Heart right ventricle (tissue), 16 donors: ENCODE measurements at regions of chr3 and their contacts with region 1.

Region 1: GRCh38 chr3:82133070-82133606 is 371.7 kb upstream of the GBE1 start:
- DNase-seq: peak; percentile 44 to 53
- ATAC-seq: peak in 7 of 8 donors; percentile 63 to 89 (median 78)
- H3K4me3 ChIP-seq: no peak overlapping the region
- H3K27ac ChIP-seq: no peak overlapping the region
- H3K4me1 ChIP-seq: no peaks in the 10 kb centered on the region
- H3K27me3 ChIP-seq: no peaks in the 10 kb centered on the region
- CTCF ChIP-seq: peak; percentile 73 to 93 (median 87)

Region 2: DNA sequence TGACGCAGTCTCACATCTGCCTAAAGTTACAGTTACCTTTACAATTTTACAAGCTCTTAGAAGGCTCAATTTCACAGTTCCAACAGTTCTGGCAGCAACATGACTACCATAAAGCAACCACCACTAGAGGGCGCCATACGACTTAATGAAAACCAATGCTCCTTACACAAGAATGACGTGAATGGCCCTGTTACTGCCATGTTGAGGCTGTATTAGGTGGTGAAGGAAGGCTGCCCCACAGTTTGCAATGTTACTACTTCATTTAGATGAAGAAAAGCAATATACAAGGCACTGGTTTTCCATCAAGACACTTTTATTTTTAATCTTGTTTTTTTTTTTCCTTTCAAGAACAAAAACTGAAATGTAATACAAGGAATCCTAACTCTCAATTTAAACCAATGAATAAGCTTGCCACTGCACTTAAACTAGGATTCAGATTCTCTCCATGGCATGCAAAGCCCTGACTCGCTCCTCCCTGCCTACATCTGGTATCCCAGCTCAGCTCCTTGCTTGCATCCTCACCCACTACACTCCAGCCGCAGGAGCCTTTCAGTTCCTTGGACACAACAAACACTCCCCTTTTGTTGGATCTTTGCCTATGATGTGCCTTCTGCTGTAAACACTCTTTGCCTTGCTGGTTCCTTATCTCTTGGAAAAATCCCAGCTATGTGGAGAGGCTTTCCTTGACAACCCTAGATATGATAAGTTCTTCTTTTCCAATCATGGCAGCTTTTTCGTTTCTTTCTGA is 642.4 kb before region 1 on chr3:
- intact Hi-C with region 1: loop called in 2 of 10 experiments (anchors 5 to 10 kb)
- DNase-seq: peak; percentile 21 to 81
- ATAC-seq: peak in 7 of 8 donors; percentile 81 to 92 (median 90)
- H3K4me3 ChIP-seq: no peak overlapping the region
- H3K27ac ChIP-seq: peak overlapping the region in 2 of 10 donors; percentile 21 to 66
- H3K4me1 ChIP-seq: peaks cover 0 to 18% (median 8%) of the 10 kb centered on the region in 9 donors
- H3K27me3 ChIP-seq: no peaks in the 10 kb centered on the region
- CTCF ChIP-seq: peak; percentile 53 to 83 (median 73)

Region 3: DNA sequence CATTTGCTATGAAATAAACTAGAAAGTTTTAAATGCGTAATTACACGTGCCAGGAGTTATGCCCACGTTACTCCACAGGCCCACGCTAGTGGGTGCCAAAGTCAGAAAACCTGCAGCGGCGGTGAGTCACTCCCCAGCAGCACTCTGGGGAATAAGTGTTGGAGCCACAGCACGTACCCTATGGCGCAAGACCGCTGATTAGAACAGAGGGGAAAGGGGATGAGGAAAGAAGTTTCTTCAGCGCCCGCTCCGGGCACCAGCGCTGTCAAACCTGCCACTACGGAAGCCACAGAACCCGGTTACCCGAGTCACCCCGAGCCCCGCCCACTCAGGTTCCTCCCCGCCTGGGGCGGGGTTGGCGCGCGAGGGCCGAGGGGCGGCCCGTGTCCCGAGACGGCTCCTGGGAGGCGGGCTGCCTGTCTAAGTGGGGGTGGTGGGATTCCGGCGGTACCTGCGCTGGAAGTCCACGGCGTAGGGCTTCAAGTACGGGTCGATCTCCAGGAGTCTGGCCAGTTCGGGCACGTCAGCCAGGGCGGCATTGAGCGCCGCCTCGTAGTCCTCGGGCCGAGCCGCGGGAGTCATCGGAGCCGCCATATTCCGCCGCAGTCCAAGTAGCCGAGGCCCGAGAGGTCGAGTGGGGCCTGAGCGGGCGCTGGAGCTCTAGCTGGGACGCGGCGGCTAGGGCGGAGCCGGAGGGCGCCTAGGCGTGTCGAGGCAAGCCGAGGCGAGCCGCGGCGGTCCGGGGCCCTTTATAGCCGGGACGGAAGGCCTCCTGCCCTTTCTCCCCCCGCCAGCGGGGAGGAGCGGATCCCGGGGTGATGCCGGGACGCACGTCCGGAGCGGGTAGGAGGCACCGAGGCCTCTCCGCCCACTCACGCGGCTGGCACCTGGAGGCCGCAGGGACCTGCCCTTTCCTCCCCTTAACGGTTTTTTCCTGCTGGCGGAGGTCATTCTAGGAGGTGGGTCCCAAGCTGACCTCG is 371.9 kb before region 1 on chr3 and contains the start of gene GBE1:
- intact Hi-C with region 1: loop called in 2 of 10 experiments (anchors 10 kb)
- DNase-seq: peak; percentile 92 to 93
- ATAC-seq: peak; percentile 92 to 97 (median 94)
- H3K4me3 ChIP-seq: peak within 1 kb of the TSS; percentile 48 to 82 (median 72)
- H3K27ac ChIP-seq: peak within 1 kb of the TSS; percentile 96 to 100 (median 99)
- H3K4me1 ChIP-seq: peaks cover 3 to 66% (median 56%) of the 10 kb centered on the region in 9 donors
- H3K27me3 ChIP-seq: no peaks in the 10 kb centered on the region
- CTCF ChIP-seq: peak in 7 of 9 donors; percentile 22 to 65 (median 47)
- total RNA-seq, gene GBE1: 69.9 to 153 (median 98.8) TPM

Region 4: DNA sequence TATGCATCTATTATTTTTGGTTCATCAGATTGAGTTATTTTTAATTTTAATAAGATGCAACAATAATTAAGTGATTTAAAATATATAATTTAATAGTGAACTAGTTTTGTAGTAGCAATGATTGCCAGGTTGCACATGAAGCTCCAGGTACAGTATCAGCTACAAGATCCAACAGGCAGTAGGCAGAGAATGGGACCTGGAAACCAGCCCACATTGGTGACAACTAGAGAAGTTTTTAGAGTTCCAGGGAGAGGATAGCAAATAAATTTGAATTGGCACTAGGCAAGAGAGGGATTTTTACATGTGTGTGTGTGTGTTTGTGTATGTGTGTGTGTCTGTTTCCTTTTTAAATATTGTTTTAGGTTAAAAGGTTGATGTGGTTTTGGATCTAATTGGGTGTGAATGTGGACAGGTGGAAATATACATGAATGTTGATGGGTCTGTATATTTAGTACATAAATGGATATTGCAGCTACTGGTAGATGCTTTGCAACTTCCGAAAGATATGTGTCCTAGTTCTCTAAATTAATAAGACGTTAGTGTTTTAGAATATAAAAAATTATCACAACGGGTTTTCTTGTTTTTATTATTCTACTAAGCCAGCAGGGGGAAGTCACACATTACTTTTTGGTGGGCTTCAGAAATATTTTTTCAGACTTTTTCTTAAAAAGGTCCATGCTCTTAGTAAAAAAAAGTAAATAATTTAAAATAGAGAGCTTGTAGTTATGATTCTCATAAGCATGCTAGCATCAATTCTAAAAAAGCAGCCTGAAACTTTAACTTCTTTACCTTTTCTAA is 261.6 kb before region 1 on chr3:
- intact Hi-C with region 1: loop called in 4 of 10 experiments (anchors 2 to 10 kb)
- DNase-seq: no peak
- ATAC-seq: no peak
- H3K4me3 ChIP-seq: no peak overlapping the region
- H3K27ac ChIP-seq: no peak overlapping the region
- H3K4me1 ChIP-seq: peaks cover 0 to 8% (median 0%) of the 10 kb centered on the region in 9 donors
- H3K27me3 ChIP-seq: no peaks in the 10 kb centered on the region
- CTCF ChIP-seq: peak in 5 of 9 donors; percentile 30 to 53 (median 48)

Region 5: DNA sequence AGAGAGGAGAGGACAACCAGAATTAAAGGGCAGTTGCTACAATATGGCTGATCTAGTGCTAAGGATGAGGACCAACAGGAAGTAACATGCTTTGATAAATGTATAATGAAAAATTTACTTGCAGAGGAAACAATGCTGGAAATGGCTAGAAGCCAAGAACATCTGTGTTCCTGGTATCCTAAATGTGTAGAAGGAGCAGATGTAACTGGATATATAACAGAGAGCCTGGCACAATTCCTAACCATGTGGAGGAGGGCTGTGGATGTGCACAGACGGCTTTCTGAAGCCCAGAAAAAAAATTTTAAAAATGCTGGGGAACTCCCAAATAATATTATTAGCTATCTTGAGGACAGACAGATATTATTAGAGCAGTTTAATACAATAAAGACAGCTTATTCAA is 212.3 kb before region 1 on chr3:
- intact Hi-C with region 1: loop called in 2 of 10 experiments (anchors 5 to 10 kb)
- DNase-seq: no peak
- ATAC-seq: no peak
- H3K4me3 ChIP-seq: no peak overlapping the region
- H3K27ac ChIP-seq: no peak overlapping the region
- H3K4me1 ChIP-seq: peaks cover 0 to 8% (median 0%) of the 10 kb centered on the region in 9 donors
- H3K27me3 ChIP-seq: no peaks in the 10 kb centered on the region
- CTCF ChIP-seq: no peak

Region 6: DNA sequence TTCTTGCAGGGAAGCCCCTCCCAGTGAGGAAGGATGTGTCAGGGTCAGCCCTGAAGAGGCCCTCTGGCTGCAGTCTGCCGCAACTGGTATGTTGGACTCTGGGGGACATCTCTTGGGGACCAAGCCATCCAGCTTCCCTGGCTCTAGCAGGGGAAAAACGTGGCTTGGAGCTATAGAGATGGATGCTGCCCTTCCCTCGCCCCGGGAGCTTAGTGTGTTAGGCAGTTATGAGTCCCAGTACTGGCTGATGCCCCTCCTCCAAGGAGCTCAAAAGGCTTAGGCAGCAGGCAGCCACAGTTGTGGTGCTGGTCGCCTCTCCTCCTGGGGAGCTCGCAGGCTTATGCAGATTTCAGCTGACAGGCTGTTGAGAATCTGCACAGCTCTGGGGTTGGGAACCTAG is 18.5 kb before region 1 on chr3:
- intact Hi-C with region 1: no loop called
- DNase-seq: no peak
- ATAC-seq: no peak
- H3K4me3 ChIP-seq: no peak overlapping the region
- H3K27ac ChIP-seq: no peak overlapping the region
- H3K4me1 ChIP-seq: no peaks in the 10 kb centered on the region
- H3K27me3 ChIP-seq: no peaks in the 10 kb centered on the region
- CTCF ChIP-seq: no peak